Astrocyte of the cerebellum (primary cell): ENCODE measurements at regions of chr12 and their contacts with region 1.

Region 1: GRCh38 chr12:83067981-83068380 is 381.3 kb downstream of the TMTC2 start:
- DNase-seq: no peak
- H3K4me3 ChIP-seq: no peak overlapping the region
- CTCF ChIP-seq: no peak

Region 2: DNA sequence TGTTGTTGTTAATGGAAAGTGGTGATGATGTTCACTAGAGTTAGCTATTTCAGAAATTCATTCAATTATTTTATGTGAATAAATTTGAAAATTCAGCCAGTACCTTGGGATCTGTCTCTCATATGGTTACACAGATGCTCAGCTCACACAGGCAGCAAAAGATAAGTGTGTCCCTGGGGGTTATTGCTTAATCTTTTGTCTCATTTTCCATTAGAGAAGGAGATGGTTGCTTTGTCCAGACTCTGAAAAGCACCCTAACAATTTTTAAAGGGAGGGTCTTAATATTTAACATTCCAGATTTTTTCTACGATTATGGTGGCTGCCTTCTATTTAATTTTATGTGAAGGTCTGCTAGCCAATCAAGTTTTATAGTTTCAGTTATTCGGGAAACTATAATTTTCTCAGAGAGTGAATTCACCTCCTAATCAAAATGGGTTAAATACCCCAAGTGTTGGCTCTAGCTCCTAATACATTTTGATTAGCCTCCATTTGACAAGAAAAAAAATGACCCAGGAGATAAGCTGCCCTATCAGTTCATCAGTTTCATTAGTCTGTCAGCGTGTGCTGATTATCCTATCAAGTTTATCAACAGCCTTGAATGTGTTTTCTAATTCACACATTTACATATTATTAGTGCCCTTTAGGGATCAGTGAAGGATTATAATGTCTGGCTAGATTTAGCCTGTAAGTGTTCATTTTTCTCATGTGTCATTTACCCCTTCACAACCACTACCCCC is 99.2 kb before region 1 on chr12:
- in situ Hi-C with region 1: no loop called
- DNase-seq: no peak
- H3K4me3 ChIP-seq: no peak overlapping the region
- CTCF ChIP-seq: no peak

Region 3: DNA sequence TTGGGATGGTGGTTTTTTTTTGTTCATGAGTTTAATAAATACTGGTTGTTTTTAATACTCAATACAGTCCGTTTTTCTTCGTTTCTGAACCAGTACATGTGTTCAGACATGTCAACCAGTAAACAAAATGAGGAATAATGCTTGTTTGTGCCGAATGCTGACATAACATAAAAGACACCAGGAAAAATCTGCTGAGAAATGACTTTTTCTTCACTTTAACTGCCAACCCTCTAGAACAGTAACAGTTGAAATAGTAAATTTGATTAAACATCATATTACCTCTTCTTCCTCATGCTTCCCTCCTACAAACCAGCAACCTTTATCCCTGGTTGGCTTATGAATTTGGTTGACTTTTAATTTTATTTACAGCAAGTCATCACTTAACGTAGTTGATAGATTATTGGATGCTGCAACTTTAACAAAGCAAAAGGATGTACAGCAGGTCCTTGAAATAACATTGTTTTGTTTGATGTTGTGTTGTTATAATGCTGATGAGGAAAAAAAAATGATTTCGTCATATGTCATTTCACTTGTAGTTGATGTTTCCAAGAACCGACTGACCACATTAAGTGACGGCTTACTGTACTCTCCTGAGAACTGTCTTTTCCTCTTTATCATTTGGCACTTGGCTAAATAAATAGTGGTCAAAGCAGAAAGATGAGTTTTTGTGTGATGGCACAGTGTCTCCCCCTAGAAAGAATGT is 40.8 kb before region 1 on chr12:
- in situ Hi-C with region 1: loop called (anchors 5 kb)
- DNase-seq: no peak
- H3K4me3 ChIP-seq: no peak overlapping the region
- CTCF ChIP-seq: no peak

Region 4: GRCh38 chr12:83121897-83122622 is 54.1 kb after region 1 on chr12:
- in situ Hi-C with region 1: no loop called
- DNase-seq: no peak
- H3K4me3 ChIP-seq: no peak overlapping the region
- CTCF ChIP-seq: no peak